IMR-90 (cell line): ENCODE measurements at regions of chr5 and their contacts with region 1.

Region 1: GRCh38 chr5:135895551-135895950 is at the start of gene IL9:
- DNase-seq: no peak
- ATAC-seq: no peak
- H3K4me3 ChIP-seq: no peak within 1 kb of the TSS
- H3K27ac ChIP-seq: no peak within 1 kb of the TSS
- H3K4me1 ChIP-seq: peaks cover 5% of the 10 kb centered on the region; the same call in 1 of the 2 replicates
- H3K27me3 ChIP-seq: peaks cover 36% of the 10 kb centered on the region
- CTCF ChIP-seq: no peak
- POLR2A ChIP-seq: no peak
- RAD21 ChIP-seq: no peak
- total RNA-seq, gene IL9: not detected in 2 replicates

Region 2: GRCh38 chr5:135930029-135930948 is 34.7 kb after region 1 on chr5:
- CTCF ChIA-PET with region 1: no interaction called
- POLR2A ChIA-PET with region 1: no interaction called
- dilution Hi-C with region 1: no loop called
- in situ Hi-C with region 1: no loop called
- intact Hi-C with region 1: loop called (anchors 5 kb)
- DNase-seq: no peak
- ATAC-seq: peak; percentile 35; the same call in 1 of the 2 replicates
- H3K4me3 ChIP-seq: peak overlapping the region; percentile 20; the same call in 1 of the 2 replicates
- H3K27ac ChIP-seq: no peak overlapping the region
- H3K4me1 ChIP-seq: no peaks in the 10 kb centered on the region; the same call in 1 of the 2 replicates
- H3K27me3 ChIP-seq: peaks cover 38% of the 10 kb centered on the region
- CTCF ChIP-seq: no peak
- POLR2A ChIP-seq: no peak
- RAD21 ChIP-seq: no peak

Region 3: GRCh38 chr5:136087961-136088871 is 192.7 kb after region 1 on chr5:
- CTCF ChIA-PET with region 1: no interaction called
- POLR2A ChIA-PET with region 1: no interaction called
- dilution Hi-C with region 1: no loop called
- in situ Hi-C with region 1: no loop called
- intact Hi-C with region 1: no loop called
- DNase-seq: peak; percentile 36
- ATAC-seq: no peak
- H3K4me3 ChIP-seq: no peak overlapping the region
- H3K27ac ChIP-seq: no peak overlapping the region
- H3K4me1 ChIP-seq: peaks cover 2% of the 10 kb centered on the region; the same call in 1 of the 2 replicates
- H3K27me3 ChIP-seq: peaks cover 4% of the 10 kb centered on the region; the same call in 1 of the 2 replicates
- CTCF ChIP-seq: no peak
- POLR2A ChIP-seq: no peak
- RAD21 ChIP-seq: no peak